ENCODE measurements at regions of chr2 and their contacts with region 1.

Region 1: DNA sequence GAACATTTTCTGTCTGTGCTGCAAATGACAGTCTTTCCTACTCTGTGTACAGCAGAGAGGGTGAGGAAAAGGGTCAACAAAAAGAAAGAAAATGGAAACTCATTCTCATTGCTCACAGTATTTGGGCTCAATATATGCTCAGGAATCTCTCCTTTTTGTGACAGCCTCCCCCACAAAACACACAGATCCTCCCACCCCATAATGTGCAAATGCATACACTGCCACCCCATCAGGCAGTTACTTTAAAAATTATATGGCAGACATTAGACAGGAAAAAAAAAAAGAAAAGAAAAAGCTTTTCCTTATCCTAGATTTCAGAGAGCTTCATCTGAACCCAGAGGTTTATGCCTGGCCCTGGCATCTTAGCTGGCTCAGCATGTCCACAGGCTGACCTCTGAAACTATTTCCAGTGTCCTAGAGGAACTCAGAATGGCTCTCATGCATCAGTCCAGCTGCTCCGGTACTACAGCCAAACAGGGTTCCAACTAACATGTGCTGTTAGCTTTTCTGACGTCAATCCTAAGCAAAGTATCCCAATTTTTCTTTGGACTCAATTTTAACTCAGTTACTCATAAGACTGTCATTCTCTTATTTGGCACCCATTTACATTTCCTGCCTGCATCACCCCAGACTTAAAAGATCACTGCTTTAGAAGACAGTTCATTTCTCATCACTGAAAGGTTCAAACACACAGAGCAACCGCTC is 105.9 kb downstream of the RBMS1 start:
- DNase-seq: no peak
- H3K4me3 Mint-ChIP-seq: peak overlapping the region; percentile 49
- H3K27ac Mint-ChIP-seq: peak overlapping the region; percentile 73
- H3K4me1 Mint-ChIP-seq: peaks cover 69% of the 10 kb centered on the region
- H3K27me3 Mint-ChIP-seq: no peaks in the 10 kb centered on the region

Region 2: GRCh38 chr2:160306985-160307384 is 80.7 kb before region 1 on chr2:
- CTCF ChIA-PET with region 1: no interaction called
- POLR2A ChIA-PET with region 1: no interaction called
- DNase-seq: no peak
- H3K4me3 Mint-ChIP-seq: no peak overlapping the region
- H3K27ac Mint-ChIP-seq: no peak overlapping the region
- H3K4me1 Mint-ChIP-seq: peaks cover 8% of the 10 kb centered on the region
- H3K27me3 Mint-ChIP-seq: no peaks in the 10 kb centered on the region

Region 3: DNA sequence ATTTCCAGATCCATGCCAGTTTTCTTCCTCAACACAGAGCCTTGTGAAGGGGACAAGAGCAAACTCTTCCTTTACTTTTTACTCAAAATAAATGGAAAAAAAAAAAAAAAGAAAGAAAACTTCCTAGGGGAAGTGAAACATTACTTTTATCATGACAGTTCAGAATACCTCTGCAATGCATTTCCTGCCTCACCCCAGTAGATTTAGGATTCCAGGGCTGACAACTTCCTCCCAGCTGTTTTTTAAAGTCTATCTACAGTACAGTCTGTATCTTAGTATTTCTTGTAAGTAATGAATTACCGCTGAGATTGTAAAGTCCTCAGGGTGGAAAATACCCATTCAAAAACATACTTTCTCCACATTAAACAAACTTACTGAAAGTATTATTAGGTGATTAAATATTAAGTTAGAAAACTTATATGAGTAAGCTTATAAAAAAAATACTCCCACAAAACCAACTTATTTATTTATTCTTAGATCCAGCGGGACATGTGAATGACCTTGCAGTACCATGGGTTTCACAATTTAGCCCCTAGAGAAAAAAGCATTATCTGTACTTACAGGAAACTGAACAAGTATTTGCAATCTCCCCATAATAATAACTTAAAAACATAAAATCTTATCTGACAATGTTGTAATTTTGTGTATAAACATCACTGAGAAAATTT is 11.8 kb before region 1 on chr2:
- CTCF ChIA-PET with region 1: interaction called, 23 read pairs
- POLR2A ChIA-PET with region 1: no interaction called
- DNase-seq: no peak
- H3K4me3 Mint-ChIP-seq: no peak overlapping the region
- H3K27ac Mint-ChIP-seq: peak overlapping the region; percentile 14
- H3K4me1 Mint-ChIP-seq: peaks cover 80% of the 10 kb centered on the region
- H3K27me3 Mint-ChIP-seq: no peaks in the 10 kb centered on the region

Measured in activated CD4-positive, alpha-beta T cell treated with anti-CD3 and anti-CD28 coated beads, Interleukin-2, amount 10 ng/mL, durations not matched to agents 7 days and 5 days (primary cell).